Mammary epithelial cell (primary cell): ENCODE measurements at regions of chr10 and their contacts with region 1.

Region 1: DNA sequence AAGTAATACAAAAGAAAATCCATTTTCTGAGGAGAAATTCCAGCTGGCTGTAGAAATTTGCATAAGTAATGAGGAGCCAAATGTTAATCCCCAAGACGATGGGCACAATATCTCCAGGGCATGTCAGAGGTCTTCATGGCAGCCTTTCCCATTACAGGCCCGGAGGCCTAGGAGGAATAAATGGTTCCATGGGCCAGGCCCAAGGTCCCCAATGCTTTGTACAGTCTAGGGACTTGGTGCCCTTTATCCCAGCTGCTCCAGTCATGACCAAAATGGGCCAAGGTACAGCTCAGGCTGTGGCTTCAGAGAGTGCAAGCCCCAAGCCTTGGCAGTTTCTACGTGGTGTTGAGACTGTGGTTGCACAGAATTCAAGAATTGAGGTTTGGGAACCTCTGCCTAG is 182.5 kb downstream of the GPR158 start:
- DNase-seq: no peak
- H3K4me3 ChIP-seq: no peak overlapping the region
- H3K27ac ChIP-seq: no peak overlapping the region
- H3K4me1 ChIP-seq: no peaks in the 10 kb centered on the region
- H3K27me3 ChIP-seq: no peaks in the 10 kb centered on the region
- CTCF ChIP-seq: no peak

Region 2: DNA sequence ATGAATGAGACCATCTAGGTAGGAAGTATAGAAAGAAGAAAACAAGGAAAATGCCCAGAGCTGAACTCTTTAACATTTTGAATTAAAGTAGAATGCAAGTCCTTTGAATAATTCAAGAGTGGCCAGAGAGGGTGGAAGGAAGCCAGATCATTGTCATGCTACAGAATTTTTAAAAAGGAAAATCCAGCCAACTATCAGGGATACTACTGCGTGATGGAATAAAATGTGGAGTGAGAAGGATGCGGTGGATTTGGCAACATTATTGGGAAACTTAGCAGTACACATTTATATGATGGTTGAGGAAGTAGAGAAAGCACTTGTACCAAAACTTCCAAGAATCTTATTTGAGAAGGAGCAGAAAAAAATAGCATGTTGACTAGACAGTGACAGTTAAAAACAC is 79.2 kb after region 1 on chr10:
- CTCF ChIA-PET with region 1: no interaction called
- dilution Hi-C with region 1: loop called (anchors 5 kb)
- in situ Hi-C with region 1: no loop called
- intact Hi-C with region 1: no loop called
- DNase-seq: no peak
- H3K4me3 ChIP-seq: no peak overlapping the region
- H3K27ac ChIP-seq: no peak overlapping the region
- H3K4me1 ChIP-seq: no peaks in the 10 kb centered on the region
- H3K27me3 ChIP-seq: no peaks in the 10 kb centered on the region
- CTCF ChIP-seq: no peak